Common myeloid progenitor, CD34-positive (primary cell): ENCODE measurements at regions of chr17 and their contacts with region 1.

Region 1: GRCh38 chr17:1716076-1716995 is 6.2 kb upstream of the TLCD2 start:
- DNase-seq: peak; percentile 100
- H3K4me3 ChIP-seq: peak overlapping the region; percentile 72 to 95 (median 80)
- H3K27ac ChIP-seq: peak overlapping the region; percentile 98 to 99
- H3K4me1 ChIP-seq: peaks cover 0 to 53% (median 45%) of the 10 kb centered on the region in 4 experiments
- H3K27me3 ChIP-seq: no peaks in the 10 kb centered on the region

Region 2: DNA sequence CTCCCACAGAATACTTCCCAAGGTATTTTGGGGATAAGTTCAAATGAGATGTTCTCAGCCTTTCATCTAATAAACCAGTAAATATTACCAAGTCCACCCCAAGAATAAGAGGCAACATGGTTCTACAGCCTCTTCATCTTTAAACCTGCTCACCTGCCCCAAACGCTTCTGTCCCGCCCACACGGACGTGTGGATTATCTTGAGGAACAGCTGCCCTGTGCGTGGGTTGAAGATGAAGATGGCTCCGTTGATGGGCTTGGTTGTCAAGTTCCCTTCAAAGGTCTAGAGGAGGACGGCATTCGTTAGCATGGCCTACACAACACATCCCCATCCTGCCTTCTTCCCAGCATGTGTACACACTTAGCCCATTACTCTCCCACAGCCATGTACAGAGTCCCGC is 58.2 kb before region 1 on chr17:
- CTCF ChIA-PET with region 1: interaction called, 10 read pairs
- POLR2A ChIA-PET with region 1: no interaction called
- DNase-seq: no peak
- H3K4me3 ChIP-seq: no peak overlapping the region
- H3K27ac ChIP-seq: no peak overlapping the region
- H3K4me1 ChIP-seq: no peaks in the 10 kb centered on the region
- H3K27me3 ChIP-seq: no peaks in the 10 kb centered on the region

Region 3: DNA sequence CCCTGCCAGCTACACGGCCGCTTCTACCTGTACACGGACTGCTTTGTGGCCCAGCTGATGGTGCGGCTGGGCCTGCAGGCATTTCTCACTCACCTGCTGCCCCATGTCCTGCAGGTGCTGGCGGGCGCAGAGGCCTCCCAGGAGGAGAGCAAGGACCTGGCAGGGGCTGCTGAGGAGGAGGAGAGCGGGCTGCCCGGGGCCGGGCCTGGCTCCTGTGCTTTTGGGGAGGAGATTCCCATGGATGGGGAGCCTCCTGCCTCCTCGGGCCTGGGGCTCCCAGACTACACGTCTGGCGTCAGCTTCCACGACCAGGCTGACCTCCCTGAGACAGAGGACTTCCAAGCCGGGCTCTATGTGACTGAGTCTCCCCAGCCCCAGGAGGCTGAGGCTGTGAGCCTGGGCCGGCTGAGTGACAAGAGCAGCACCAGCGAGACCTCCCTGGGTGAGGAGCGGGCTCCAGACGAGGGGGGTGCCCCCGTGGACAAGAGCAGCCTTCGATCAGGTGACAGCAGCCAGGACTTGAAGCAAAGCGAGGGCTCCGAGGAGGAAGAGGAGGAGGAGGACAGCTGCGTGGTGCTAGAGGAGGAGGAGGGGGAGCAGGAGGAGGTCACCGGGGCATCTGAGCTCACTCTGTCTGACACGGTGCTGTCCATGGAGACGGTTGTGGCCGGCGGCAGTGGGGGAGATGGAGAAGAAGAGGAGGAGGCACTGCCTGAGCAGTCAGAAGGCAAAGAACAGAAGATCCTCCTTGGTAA is 11.7 kb after region 1 on chr17:
- CTCF ChIA-PET with region 1: interaction called, 10 read pairs
- POLR2A ChIA-PET with region 1: no interaction called
- DNase-seq: no peak
- H3K4me3 ChIP-seq: no peak overlapping the region
- H3K27ac ChIP-seq: no peak overlapping the region
- H3K4me1 ChIP-seq: peaks cover 0 to 30% (median 23%) of the 10 kb centered on the region in 4 experiments
- H3K27me3 ChIP-seq: no peaks in the 10 kb centered on the region

Region 4: DNA sequence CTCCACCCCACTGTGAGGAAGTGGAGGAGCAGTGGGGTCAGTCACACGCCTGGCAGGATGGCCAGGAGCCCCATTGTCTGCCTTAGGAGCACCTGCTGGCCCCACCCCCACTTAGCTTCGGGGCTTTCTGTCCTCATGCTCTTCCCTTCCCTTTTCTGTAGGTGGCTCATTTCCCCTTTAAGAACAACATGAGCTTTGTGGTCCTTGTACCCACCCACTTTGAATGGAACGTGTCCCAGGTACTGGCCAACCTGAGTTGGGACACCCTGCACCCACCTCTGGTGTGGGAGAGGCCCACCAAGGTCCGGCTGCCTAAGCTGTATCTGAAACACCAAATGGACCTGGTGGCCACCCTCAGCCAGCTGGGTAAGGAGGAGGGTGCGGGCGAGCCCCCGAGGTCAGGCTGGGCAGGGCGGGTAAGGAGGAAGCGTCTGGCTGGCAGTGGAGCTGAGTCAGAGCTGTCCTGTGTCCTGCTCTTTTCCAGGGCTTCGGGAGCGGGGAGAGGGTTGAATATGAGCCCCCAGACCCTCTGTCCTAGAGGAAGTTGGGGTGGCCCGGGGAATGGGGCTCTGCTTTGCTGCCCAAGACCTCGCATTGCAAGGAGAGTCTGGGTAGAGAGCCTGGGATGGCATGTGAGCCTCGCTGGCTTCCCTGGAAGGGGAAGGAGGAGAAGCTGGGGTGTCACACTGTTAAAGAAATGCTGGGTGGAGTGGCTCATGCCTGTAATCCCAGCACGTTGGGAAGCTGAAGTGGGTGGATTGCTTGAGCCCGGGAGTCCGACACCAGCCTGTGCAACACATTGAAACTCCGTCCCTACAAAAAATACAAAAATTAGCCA is 36.3 kb after region 1 on chr17:
- CTCF ChIA-PET with region 1: interaction called, 10 read pairs
- POLR2A ChIA-PET with region 1: interaction called, 3 read pairs
- DNase-seq: peak; percentile 35 to 77 (median 67)
- H3K4me3 ChIP-seq: peak overlapping the region in 5 of 7 experiments; percentile 23 to 67 (median 31)
- H3K27ac ChIP-seq: no peak overlapping the region
- H3K4me1 ChIP-seq: peaks cover 0 to 23% (median 13%) of the 10 kb centered on the region in 4 experiments
- H3K27me3 ChIP-seq: no peaks in the 10 kb centered on the region

Region 5: DNA sequence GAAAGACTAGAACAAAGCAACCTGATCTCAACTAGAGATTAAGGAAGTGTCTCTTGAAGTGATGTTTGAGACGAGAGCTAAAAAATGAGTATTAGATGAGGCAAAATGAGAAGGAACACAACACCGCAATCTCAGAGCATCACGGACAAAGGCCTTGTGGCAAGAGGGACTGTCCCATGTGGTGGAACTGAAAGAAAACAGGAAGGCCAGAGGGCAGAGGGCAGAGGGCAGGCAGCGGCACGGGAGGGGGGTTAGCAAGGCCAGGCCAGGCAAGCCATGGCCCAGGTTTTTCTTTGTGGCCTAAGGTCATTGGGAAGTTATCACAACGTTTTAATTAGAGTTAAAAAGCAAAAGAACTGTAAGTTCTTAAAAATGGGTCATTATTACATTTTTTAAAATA is 136.0 kb after region 1 on chr17:
- CTCF ChIA-PET with region 1: no interaction called
- POLR2A ChIA-PET with region 1: no interaction called
- DNase-seq: no peak
- H3K4me3 ChIP-seq: no peak overlapping the region
- H3K27ac ChIP-seq: peak overlapping the region in 1 of 2 experiments; percentile 18
- H3K4me1 ChIP-seq: no peaks in the 10 kb centered on the region
- H3K27me3 ChIP-seq: no peaks in the 10 kb centered on the region